ENCODE measurements at regions of chr5 and their contacts with region 1.

Region 1: DNA sequence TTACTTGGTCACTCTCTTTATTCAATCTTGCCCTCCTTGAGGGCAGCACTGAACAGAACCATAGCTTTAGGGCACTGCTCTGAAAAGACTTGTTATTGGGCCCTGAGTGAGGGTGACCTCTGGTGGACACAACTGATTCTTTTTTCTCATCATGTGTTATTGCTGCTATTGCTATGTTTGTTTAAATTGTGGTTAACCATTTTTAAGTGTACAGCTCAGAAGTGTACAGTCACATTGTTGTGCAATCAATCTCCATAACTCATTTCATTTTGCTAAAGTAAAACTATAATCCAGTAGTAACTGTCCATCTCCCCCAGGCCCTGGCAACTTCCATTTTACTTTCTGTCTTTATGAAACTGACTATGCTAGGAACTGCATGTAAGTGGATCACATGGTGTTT is 351.1 kb upstream of the RIOK2 start:
- DNase-seq: peak; percentile 46
- H3K4me3 ChIP-seq: no peak overlapping the region
- H3K27ac ChIP-seq: no peak overlapping the region
- H3K4me1 ChIP-seq: no peaks in the 10 kb centered on the region
- H3K27me3 ChIP-seq: peaks cover 14% of the 10 kb centered on the region
- CTCF ChIP-seq: peak; percentile 62

Region 2: GRCh38 chr5:97224112-97224750 is 309.9 kb before region 1 on chr5:
- CTCF ChIA-PET with region 1: no interaction called
- POLR2A ChIA-PET with region 1: no interaction called
- intact Hi-C with region 1: loop called (anchors 10 kb)
- DNase-seq: no peak
- H3K4me3 ChIP-seq: no peak overlapping the region
- H3K27ac ChIP-seq: no peak overlapping the region
- H3K4me1 ChIP-seq: no peaks in the 10 kb centered on the region
- H3K27me3 ChIP-seq: no peaks in the 10 kb centered on the region
- CTCF ChIP-seq: no peak

Region 3: DNA sequence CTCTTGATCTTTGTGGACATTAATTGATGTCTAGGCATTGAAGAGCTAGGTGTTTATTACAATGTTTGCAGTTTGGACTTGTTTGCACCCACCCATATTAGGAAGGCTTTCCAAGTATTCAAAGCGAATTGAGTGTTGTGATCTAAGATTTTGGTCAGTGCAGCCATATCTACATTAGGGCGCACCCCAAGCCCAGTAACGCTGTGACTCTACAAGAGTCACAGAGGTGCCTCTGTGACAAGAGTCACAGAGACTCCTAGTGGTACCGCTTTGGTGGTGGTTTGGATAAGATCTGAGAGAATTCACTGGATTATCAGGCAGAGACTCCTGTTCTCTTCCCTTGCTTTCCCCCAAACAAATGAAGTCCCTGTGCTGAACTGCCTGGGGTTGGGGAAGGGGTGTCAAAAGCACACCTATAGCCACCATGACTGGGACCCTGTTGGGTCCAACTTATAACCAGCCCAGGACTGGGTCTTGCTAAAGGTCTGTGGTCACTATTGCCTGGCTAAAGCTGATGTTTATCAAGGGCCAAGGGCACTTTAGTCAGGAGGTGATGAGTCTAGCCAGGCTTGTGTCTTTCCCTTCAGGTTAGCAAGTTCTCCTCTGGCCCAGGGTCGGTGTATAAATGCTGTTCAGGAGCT is 237.0 kb before region 1 on chr5:
- CTCF ChIA-PET with region 1: no interaction called
- POLR2A ChIA-PET with region 1: no interaction called
- intact Hi-C with region 1: loop called (anchors 2 kb)
- DNase-seq: peak; percentile 68
- H3K4me3 ChIP-seq: no peak overlapping the region
- H3K27ac ChIP-seq: no peak overlapping the region
- H3K4me1 ChIP-seq: no peaks in the 10 kb centered on the region
- H3K27me3 ChIP-seq: peaks cover 4% of the 10 kb centered on the region
- CTCF ChIP-seq: peak; percentile 62

Region 4: GRCh38 chr5:97383996-97384395 is 150.2 kb before region 1 on chr5:
- CTCF ChIA-PET with region 1: no interaction called
- POLR2A ChIA-PET with region 1: no interaction called
- intact Hi-C with region 1: no loop called
- DNase-seq: no peak
- H3K4me3 ChIP-seq: no peak overlapping the region
- H3K27ac ChIP-seq: no peak overlapping the region
- H3K4me1 ChIP-seq: no peaks in the 10 kb centered on the region
- H3K27me3 ChIP-seq: no peaks in the 10 kb centered on the region
- CTCF ChIP-seq: no peak

Region 5: DNA sequence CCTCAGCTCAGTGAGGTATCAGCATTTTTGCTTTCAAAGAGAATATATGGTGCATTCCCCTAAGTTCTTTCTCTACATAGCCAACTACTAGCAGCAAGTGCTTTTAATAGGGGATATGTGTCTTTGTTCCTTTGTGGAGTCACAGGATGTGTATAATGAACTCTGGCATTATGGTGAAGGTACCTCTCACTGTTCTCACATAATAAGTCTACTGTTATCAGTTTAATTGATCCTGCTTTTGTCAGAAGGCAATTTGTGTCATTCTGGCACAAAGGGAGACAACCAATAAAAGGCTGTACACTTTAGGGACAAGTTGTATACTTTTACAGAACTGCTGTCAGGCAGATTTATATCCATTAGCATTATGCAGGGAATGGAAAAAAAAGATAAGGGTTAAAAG is 180.3 kb after region 1 on chr5:
- CTCF ChIA-PET with region 1: no interaction called
- POLR2A ChIA-PET with region 1: no interaction called
- intact Hi-C with region 1: no loop called
- DNase-seq: no peak
- H3K4me3 ChIP-seq: no peak overlapping the region
- H3K27ac ChIP-seq: no peak overlapping the region
- H3K4me1 ChIP-seq: no peaks in the 10 kb centered on the region
- H3K27me3 ChIP-seq: no peaks in the 10 kb centered on the region
- CTCF ChIP-seq: no peak